ENCODE measurements at regions of chr4 and their contacts with region 1.

Region 1: DNA sequence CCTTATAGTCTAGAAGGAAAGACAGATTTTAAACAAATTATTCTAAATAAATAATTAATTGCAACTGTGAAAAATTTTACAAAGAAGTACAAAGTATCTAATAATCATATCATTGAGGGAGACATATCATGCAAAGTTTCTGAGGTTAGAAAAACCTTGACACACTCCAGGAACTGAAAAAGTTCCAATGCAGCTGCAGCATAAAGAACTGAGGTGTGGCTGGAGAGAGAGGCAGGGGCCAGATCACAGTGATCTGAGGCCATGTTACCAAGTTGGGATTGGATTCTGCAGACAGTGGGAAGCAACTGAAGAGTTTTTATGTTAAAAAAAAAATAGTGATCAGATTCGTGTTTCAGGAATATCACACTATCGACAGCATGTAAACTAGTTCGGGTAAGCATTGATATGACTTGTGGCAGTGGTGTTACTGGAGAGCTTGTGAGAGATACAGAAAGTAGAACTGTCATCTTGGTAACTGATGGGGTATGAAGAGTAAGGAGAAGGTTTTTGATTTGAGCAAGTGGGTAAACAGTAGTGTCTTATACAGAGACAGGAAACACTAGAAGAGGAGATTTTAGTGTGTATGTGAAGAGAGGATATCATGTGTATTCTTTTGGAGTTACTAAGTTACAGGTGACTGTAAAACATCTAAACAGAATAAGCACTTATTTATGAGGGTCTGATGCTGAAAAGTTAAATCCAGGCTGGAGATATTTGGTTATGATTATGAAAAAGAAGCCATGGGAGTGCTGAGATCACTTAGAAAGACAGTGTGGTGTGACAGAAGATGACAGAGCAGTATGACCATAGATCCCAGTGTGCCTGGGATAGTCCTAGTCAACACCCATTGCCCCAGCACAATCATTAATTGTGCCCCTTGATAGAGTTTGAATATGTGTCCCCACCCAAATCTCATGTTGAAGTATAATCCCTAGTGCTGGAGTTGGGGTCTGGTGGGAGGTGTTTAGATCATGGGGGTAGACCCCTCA is 15.6 kb upstream of the SPRY1 start:
- DNase-seq: no peak
- H3K4me3 ChIP-seq: no peak overlapping the region
- H3K27ac ChIP-seq: no peak overlapping the region
- H3K4me1 ChIP-seq: no peaks in the 10 kb centered on the region
- H3K27me3 ChIP-seq: no peaks in the 10 kb centered on the region
- CTCF ChIP-seq: no peak
- EP300 ChIP-seq: no peak
- POLR2A ChIP-seq: no peak

Region 2: DNA sequence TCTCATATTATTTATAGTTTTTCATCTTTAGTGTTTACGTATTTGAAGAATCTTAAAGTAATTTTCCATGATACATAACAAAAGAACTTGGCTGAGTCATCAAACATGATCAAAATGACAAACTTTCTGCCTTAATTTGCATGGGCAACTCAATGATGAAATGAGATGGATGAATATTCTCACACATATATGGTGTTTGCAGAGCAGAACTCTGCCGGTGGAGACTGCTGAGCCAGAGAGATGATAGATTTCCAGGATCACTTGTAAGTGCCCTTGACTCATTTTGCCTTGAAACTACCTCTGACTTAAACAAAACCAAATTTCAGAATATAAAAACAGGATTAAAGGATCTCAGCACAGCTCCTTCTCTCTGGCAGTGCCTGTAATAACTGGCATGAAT is 1467.4 kb before region 1 on chr4:
- intact Hi-C with region 1: no loop called
- DNase-seq: no peak
- H3K4me3 ChIP-seq: no peak overlapping the region
- H3K27ac ChIP-seq: no peak overlapping the region
- H3K4me1 ChIP-seq: no peaks in the 10 kb centered on the region
- H3K27me3 ChIP-seq: no peaks in the 10 kb centered on the region
- CTCF ChIP-seq: no peak
- EP300 ChIP-seq: no peak
- POLR2A ChIP-seq: no peak

Region 3: DNA sequence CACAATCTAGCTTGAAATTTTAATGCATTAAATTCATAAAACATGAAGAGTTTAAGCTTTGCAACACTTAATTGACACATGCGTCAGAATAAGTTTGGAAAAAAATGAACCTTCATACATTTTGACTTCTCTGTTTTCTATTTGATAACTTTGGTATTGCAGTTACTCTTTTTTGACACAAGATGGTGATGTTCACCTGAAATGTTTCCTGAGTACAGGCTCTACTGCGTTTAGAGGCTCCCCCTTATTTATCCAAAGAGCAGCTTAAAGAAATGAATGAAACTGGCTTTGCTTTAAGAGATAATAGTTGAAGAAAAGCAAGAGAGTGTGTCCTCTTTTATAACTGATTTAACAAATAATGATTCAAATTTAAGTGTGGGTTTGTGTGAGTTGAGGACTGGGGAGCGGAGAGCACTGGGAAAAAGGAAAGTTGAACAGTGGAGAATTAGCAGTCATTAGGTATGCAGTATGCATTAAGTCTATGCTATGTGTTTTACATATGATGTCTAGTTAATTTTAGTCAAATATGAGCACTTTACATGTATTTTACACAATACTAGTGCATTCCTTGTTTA is 278.0 kb before region 1 on chr4:
- intact Hi-C with region 1: loop called in 1 of 4 experiments (anchors 10 kb)
- DNase-seq: no peak
- H3K4me3 ChIP-seq: no peak overlapping the region
- H3K27ac ChIP-seq: no peak overlapping the region
- H3K4me1 ChIP-seq: no peaks in the 10 kb centered on the region
- H3K27me3 ChIP-seq: no peaks in the 10 kb centered on the region
- CTCF ChIP-seq: peak; percentile 28 to 84 (median 47)
- EP300 ChIP-seq: no peak
- POLR2A ChIP-seq: no peak

Region 4: DNA sequence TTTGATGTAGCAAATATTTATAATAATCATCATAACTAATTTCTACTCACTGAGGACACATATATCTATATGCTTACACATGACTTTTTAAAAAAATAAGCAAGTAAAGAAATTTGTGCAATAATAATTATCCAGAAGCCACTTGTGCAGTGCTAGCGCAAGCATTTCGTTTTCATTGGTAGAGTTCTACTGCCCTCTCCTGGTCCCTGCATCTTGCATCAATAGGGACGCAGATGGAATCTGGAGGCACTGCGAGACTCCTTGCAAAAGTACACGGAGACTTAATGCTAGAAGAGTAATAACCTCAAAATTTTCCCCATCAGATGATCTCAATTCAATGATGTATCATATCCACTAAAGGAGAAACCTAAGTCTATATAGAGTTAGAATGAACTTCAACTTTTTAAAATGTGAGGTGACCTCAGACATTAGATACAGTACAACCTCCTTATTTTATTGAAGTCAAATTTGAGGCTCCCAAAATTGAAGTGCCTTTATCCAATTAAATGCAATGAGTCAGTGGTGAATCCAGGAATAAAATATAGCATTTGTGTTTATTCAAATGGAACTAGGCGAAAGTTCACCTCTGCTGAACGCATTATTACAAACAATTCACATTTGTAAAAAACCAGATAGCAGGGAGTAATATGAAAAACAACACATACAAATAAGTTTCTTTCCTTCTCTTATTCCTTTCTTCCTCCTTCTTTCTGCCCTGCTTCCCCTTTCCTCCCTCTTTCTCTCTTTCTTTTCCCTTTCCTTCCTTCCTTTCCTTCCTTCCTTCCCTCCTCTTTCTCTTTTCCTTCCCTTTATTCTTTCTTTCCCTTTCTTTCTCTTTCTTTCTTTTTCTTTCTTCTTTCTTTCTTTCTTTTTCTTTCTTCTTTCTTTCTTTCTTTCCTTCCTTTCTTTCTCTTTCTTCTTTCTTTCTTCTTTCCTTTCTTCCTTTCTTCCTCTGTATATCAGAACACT is 881.5 kb after region 1 on chr4:
- intact Hi-C with region 1: loop called in 1 of 4 experiments (anchors 10 kb)
- DNase-seq: peak; percentile 31 to 73 (median 40)
- H3K4me3 ChIP-seq: no peak overlapping the region
- H3K27ac ChIP-seq: no peak overlapping the region
- H3K4me1 ChIP-seq: no peaks in the 10 kb centered on the region
- H3K27me3 ChIP-seq: no peaks in the 10 kb centered on the region
- CTCF ChIP-seq: peak; percentile 40 to 65 (median 61)
- EP300 ChIP-seq: no peak
- POLR2A ChIP-seq: no peak

Measured in ovary (tissue), 10 donors.